PC-9 (cell line): ENCODE measurements at regions of chr6 and their contacts with region 1.

Region 1: DNA sequence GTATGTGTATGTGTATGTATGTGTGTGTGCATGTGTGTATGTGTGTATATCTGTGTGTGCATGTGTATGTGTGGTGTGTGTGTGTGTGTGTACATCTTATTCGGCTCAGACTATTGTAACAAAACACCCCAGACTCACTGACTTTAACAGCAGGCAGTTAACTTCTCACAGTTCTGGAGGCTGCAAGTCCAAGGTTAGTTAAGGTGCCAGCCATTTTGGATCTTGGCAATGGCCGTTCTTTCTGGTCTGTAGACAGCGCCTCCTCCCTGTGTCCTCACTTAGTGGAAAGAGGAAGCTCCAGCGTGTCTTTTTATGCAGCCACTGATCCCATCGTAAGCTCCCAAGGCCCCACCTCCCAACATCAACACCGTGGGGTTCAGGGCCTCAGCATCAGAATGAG is 128.3 kb upstream of the THBS2 start:
- DNase-seq: no peak
- H3K4me3 ChIP-seq: no peak overlapping the region
- H3K27ac ChIP-seq: no peak overlapping the region
- H3K4me1 ChIP-seq: no peaks in the 10 kb centered on the region
- H3K27me3 ChIP-seq: peaks cover 66% of the 10 kb centered on the region
- CTCF ChIP-seq: no peak

Region 2: GRCh38 chr6:169121013-169121412 is 261.0 kb before region 1 on chr6:
- CTCF ChIA-PET with region 1: no interaction called
- POLR2A ChIA-PET with region 1: no interaction called
- intact Hi-C with region 1: no loop called
- DNase-seq: no peak
- H3K4me3 ChIP-seq: no peak overlapping the region
- H3K27ac ChIP-seq: no peak overlapping the region
- H3K4me1 ChIP-seq: no peaks in the 10 kb centered on the region
- H3K27me3 ChIP-seq: no peaks in the 10 kb centered on the region; the same call in 1 of the 2 replicates
- CTCF ChIP-seq: no peak

Region 3: DNA sequence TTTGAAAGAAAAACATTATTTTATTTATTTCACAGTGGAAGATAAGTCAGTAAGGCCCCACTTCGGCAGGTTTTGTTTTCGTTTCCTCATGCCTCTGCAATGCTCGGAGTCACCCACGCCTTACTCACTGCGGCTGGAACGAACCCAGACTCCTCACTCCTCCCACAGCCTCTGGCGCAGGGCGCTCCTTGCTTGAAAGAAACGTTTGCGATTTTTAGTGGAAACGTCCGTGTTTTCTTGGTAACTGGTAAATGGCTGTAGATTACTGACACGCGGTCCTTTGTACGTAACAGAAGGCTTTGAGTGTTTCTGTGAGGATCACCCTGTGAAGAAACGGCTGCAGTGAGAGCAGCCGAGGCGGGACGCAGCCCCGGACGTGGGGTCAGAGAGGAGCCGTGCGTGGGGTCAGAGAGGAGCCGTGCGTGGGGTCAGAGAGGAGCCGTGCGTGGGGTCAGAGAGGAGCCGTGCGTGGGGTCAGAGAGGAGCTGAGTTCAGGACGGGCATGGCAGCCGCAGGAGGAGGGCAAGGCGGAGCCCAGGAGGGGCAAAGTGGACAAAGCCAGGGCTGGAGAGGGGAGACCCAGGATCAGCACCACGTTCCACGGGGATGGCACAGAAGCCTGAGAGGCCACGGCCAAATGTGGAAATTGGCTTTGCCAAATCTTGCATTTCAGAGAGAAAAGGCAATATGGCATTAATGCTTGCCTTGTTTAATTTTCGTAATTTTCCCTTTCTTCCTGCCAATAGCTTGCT is 70.3 kb after region 1 on chr6:
- CTCF ChIA-PET with region 1: no interaction called
- POLR2A ChIA-PET with region 1: no interaction called
- intact Hi-C with region 1: loop called (anchors 2 kb)
- DNase-seq: peak; percentile 52 to 70
- H3K4me3 ChIP-seq: peak overlapping the region; percentile 55; the same call in 1 of the 2 replicates
- H3K27ac ChIP-seq: no peak overlapping the region
- H3K4me1 ChIP-seq: no peaks in the 10 kb centered on the region
- H3K27me3 ChIP-seq: no peaks in the 10 kb centered on the region
- CTCF ChIP-seq: no peak